PC-9 (cell line): ENCODE measurements at regions of chr2 and their contacts with region 1.

Region 1: GRCh38 chr2:205706769-205707381 is 24.6 kb downstream of the NRP2 start:
- DNase-seq: peak in 1 of 2 experiments; percentile 39
- H3K4me3 ChIP-seq: no peak overlapping the region
- H3K27ac ChIP-seq: no peak overlapping the region
- H3K4me1 ChIP-seq: peaks cover 10% of the 10 kb centered on the region
- H3K27me3 ChIP-seq: no peaks in the 10 kb centered on the region
- CTCF ChIP-seq: no peak

Region 2: GRCh38 chr2:205748639-205749477 is 42.0 kb after region 1 on chr2:
- CTCF ChIA-PET with region 1: interaction called, 4 read pairs
- POLR2A ChIA-PET with region 1: interaction called, 3 read pairs
- intact Hi-C with region 1: loop called (anchors 2 kb)
- DNase-seq: peak; percentile 65 to 93
- H3K4me3 ChIP-seq: peak overlapping the region; percentile 12; the same call in 1 of the 2 replicates
- H3K27ac ChIP-seq: peak overlapping the region; percentile 95
- H3K4me1 ChIP-seq: peaks cover 87% of the 10 kb centered on the region
- H3K27me3 ChIP-seq: no peaks in the 10 kb centered on the region
- CTCF ChIP-seq: no peak

Region 3: GRCh38 chr2:205776139-205776538 is 69.3 kb after region 1 on chr2:
- CTCF ChIA-PET with region 1: no interaction called
- POLR2A ChIA-PET with region 1: no interaction called
- intact Hi-C with region 1: no loop called
- DNase-seq: no peak
- H3K4me3 ChIP-seq: no peak overlapping the region
- H3K27ac ChIP-seq: no peak overlapping the region
- H3K4me1 ChIP-seq: no peaks in the 10 kb centered on the region
- H3K27me3 ChIP-seq: no peaks in the 10 kb centered on the region
- CTCF ChIP-seq: peak; percentile 62